AG04450 (cell line): ENCODE measurements at regions of chr7 and their contacts with region 1.

Region 1: DNA sequence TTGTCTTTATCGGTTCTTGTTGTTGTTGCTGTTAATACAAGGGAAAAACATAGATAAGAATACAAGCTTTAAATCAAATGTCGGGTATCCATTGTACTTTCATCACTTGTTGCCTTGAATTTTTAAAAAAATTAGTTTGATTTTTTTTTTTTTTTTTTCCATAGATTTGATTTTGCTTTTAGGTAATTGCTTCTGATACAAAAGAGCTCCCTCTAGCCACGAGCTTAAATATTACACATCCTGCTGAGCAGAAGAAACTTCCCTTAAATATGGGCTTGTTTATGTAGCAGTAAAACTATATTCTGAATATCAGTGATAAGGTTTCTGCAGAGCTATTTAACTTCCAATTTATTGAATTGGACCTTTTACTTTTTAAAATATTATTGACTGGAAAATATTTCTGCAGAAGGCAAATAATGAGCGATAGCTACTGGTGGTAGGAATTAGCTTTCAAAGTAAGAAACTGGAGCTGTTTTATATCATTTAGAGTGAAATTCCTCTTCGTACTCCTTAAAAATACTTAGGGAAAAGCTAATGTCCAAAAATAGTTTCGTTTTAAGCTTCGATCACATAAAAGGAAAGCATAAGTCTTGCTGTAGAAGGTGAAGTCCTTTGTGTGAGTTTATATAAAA is 216.9 kb downstream of the POLR1F start:
- DNase-seq: peak; percentile 8
- H3K4me3 ChIP-seq: no peak overlapping the region
- H3K27ac ChIP-seq: no peak overlapping the region
- H3K27me3 ChIP-seq: no peaks in the 10 kb centered on the region
- CTCF ChIP-seq: peak; percentile 71

Region 2: DNA sequence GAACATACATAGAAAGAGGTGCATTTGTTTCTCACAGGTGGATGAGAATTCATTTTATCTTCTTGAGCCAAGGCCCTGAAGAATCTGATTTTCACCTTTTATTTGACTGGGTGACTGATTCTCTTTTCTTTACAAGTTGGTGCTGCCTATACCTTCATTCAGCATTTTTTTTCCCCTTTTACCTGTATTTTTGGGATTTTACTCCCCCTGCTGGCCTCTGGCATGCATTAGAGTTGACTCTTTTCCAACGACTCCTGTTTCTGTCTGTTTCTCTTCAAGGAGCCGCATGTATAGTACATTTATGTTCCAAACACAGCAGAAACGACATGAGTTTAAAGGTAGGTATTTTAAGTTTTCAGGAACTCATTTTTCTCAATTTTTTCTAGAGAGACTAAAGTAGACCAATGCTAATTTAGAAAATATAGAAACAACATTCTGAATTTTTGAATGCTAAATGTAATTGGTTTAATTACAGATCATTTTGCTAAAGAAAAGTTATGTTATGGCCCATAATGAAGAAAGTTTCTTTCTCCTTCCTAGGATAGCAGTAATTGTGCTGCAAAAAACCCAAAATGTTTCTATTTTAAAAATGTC is 1146.2 kb before region 1 on chr7:
- CTCF ChIA-PET with region 1: interaction called, 11 read pairs
- POLR2A ChIA-PET with region 1: no interaction called
- DNase-seq: no peak
- H3K4me3 ChIP-seq: no peak overlapping the region
- H3K27ac ChIP-seq: no peak overlapping the region
- H3K27me3 ChIP-seq: no peaks in the 10 kb centered on the region
- CTCF ChIP-seq: peak; percentile 89

Region 3: DNA sequence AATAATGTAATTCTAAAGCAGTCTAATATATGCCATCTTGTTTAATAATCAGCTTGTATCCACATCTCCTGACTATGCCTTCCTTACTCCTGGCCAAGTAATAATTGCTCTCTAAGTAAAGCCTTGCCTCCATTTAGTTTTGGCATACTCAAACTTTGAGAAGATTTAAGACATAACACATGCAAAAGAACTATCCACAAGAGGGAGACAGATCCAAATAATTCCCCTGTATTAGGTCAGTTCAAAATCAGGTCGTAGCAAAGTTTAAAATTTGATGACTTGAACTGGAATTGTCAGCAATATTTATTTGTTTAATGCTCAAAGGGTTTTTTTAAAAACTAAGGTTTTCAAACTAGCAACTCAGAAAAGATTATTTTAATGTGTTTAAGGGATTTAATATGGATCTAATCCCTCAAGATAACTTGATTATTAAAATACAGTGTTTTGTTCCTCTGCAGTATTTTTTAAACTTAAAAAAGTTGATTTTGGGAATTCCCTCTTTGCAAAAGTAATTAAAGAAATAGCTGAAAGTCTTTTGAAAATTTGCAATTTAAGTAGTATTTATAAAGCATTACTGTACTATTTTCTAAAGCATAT is 901.1 kb before region 1 on chr7:
- CTCF ChIA-PET with region 1: interaction called, 14 read pairs
- POLR2A ChIA-PET with region 1: no interaction called
- DNase-seq: no peak
- H3K4me3 ChIP-seq: no peak overlapping the region
- H3K27ac ChIP-seq: no peak overlapping the region
- H3K27me3 ChIP-seq: no peaks in the 10 kb centered on the region
- CTCF ChIP-seq: peak; percentile 75

Region 4: GRCh38 chr7:18693406-18693805 is 798.5 kb before region 1 on chr7:
- CTCF ChIA-PET with region 1: interaction called, 10 read pairs
- POLR2A ChIA-PET with region 1: no interaction called
- DNase-seq: peak; percentile 63
- H3K4me3 ChIP-seq: no peak overlapping the region
- H3K27ac ChIP-seq: no peak overlapping the region
- H3K27me3 ChIP-seq: no peaks in the 10 kb centered on the region
- CTCF ChIP-seq: peak; percentile 85

Region 5: DNA sequence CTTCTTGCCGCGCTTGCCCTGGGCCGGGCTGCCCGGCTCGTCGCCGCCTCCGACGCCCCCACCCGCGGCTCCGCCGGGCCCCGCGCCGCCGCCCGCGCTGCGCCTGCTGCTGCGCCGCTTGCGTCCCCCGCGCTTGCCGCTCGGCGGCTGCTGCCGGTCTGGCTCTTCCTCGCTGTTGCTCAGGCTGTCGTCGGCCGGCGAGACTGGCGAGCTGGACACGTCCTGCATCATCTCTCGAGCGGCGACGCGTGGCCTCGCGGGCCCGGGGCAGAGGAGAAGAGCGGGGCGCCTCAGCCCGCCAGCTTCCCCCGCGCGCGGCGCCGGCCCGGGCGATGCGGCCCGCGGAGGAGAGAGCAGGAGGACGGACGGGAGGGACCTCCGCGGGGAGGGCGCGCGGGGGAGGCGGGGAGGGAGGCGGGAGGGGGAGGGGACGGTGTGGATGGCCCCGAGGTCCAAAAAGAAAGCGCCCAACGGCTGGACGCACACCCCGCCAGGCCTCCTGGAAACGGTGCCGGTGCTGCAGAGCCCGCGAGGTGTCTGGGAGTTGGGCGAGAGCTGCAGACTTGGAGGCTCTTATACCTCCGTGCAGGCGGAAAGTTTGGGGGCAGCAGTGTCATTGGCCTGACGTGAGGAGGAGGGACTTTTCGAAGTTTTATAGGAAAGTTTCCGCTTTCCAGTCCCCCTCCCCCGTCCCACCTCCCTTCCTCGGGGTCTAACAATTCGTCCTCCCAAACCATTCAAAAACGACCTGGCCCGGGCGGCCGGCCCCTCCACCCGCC is 374.7 kb before region 1 on chr7 and contains the start of gene TWIST1:
- CTCF ChIA-PET with region 1: interaction called, 83 read pairs
- POLR2A ChIA-PET with region 1: no interaction called
- DNase-seq: peak; percentile 86
- H3K4me3 ChIP-seq: peak within 1 kb of the TSS; percentile 94
- H3K27ac ChIP-seq: peak within 1 kb of the TSS; percentile 54
- H3K27me3 ChIP-seq: no peaks in the 10 kb centered on the region
- CTCF ChIP-seq: no peak
- polyA plus RNA-seq, gene TWIST1: 19.4 and 26.5 TPM in 2 replicates

Region 6: DNA sequence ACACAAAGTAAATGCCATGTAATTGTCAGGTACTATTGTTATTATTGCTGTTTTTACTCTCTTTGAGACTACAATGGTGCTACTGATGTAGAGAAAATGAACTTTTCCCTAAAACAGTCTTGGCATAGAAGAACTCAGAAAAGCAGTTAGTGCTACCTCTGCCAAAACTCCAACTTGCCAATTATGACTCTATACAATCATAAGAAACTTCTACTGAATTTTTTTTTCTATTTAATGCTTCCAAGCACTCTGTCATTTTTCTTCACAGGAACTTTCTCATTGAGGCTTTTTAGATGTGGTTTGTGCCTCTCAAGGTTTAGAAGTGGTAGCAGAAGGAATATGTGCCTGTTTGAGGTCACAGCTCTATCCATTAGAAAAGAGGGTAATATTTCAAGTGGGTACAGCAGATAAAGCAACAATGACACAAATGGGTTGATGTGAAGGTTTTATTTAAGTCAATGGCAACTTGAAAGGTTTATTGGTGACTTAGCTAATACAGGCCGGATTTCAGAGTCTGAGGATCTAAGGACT is 282.7 kb before region 1 on chr7:
- CTCF ChIA-PET with region 1: interaction called, 13 read pairs
- POLR2A ChIA-PET with region 1: no interaction called
- DNase-seq: no peak
- H3K4me3 ChIP-seq: no peak overlapping the region
- H3K27ac ChIP-seq: no peak overlapping the region
- H3K27me3 ChIP-seq: no peaks in the 10 kb centered on the region
- CTCF ChIP-seq: no peak